ENCODE measurements at regions of chr4 and their contacts with region 1.

Region 1: DNA sequence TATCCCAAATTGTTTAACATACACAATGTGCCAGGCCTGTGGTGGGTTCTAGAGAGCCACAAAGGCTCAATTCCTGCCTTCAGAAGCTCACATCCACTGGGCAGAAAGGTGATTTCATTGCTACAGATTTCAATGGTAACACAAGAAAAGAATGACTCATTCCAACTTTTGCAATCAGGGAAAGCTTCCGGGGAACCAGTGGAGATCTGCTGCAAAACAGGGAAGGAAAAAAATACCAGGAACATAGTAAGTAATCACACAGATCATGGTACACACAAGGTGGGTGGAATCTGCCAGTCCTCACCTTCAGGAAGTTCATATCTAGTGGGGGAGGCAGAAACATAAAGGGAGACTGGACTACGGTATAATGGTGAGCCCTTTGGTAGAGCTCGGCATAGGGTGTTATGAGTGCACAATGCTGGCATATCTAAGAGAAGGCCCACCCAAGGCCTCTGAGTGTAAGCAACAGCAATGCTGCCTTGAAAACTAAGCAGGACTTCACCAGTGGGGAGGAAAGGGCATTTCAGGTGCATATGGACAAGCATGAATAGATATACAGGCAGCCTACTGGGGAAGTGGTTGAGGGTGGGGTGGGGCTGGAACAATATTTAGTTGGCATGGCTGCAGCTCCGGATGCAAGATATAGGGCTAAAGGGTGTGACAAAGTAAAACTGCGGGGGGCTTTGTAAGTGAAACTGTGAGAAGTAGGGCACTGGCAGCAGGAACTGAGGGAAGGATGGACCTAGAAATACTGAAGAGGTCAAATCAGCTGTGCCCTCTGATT is 24.2 kb downstream of the GPRIN3 start:
- DNase-seq: no peak
- H3K4me3 ChIP-seq: no peak overlapping the region
- H3K27me3 ChIP-seq: no peaks in the 10 kb centered on the region
- CTCF ChIP-seq: no peak

Region 2: DNA sequence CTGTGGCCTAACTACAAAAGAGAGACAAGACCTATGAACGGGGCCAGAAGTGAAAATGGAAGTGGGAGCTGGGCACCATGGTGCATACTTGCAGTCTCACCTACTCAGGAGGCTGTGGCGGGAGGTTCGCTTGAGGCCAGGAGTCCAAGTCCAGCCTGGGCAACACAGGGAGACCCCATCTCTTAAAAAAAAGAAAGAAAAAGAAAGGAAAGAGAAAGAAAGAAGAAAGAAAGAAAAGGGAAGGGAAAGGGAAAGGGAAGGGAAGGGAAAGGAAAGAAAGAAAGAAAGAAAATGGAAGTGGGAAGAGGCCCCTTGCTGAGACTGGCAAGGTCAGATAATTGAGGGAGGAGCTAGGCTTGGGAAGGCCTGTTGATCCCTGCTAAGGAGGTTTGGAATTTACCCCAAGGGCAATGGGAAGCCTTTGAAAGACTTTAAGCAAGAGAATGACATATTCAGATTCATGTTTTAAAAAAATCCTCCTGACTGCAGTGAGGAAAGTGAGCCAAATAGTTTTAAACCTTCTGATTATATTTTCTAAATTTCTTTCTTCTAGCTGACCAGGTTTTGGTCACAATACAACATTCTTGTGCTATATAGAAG is 844.2 kb before region 1 on chr4:
- CTCF ChIA-PET with region 1: no interaction called
- POLR2A ChIA-PET with region 1: interaction called, 21 read pairs
- DNase-seq: peak; percentile 9
- H3K4me3 ChIP-seq: no peak overlapping the region
- H3K27me3 ChIP-seq: no peaks in the 10 kb centered on the region
- CTCF ChIP-seq: no peak

Measured in BJ (cell line).